Caco-2 (cell line): ENCODE measurements at regions of chr5 and their contacts with region 1.

Region 1: GRCh38 chr5:148523139-148523538 is 131.2 kb downstream of the HTR4 start:
- DNase-seq: peak in 1 of 2 experiments; percentile 4
- H3K4me3 ChIP-seq: no peak overlapping the region
- H3K4me3 Mint-ChIP-seq: no peak overlapping the region
- H3K27ac Mint-ChIP-seq: no peak overlapping the region
- H3K4me1 ChIP-seq: no peaks in the 10 kb centered on the region
- H3K4me1 Mint-ChIP-seq: no peaks in the 10 kb centered on the region
- H3K27me3 ChIP-seq: no peaks in the 10 kb centered on the region
- H3K27me3 Mint-ChIP-seq: peaks cover 16% of the 10 kb centered on the region
- CTCF ChIP-seq: no peak

Region 2: GRCh38 chr5:148542812-148543211 is 19.7 kb after region 1 on chr5:
- CTCF ChIA-PET with region 1: no interaction called
- POLR2A ChIA-PET with region 1: no interaction called
- intact Hi-C with region 1: no loop called
- DNase-seq: no peak
- H3K4me3 ChIP-seq: no peak overlapping the region
- H3K4me3 Mint-ChIP-seq: no peak overlapping the region
- H3K27ac Mint-ChIP-seq: no peak overlapping the region
- H3K4me1 ChIP-seq: no peaks in the 10 kb centered on the region
- H3K4me1 Mint-ChIP-seq: no peaks in the 10 kb centered on the region
- H3K27me3 ChIP-seq: no peaks in the 10 kb centered on the region
- H3K27me3 Mint-ChIP-seq: peaks cover 22% of the 10 kb centered on the region
- CTCF ChIP-seq: no peak

Region 3: DNA sequence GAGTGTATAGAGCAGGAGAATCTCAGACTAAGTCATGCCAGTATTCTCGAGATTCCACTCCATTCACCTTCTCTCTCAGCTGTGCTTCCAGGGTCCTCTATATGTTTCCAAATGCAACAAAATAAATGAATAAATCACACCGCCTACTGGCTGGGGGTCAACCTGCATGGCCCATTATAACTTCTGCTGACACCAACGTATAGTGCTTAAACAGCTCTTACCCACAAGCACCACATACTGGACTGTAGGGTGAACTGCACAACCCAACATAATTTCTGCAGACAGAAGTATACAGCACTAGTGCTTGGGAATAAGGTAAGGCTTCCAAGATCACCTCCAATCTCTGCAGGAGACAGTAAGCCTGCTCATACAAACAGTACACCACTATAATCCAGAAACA is 164.3 kb after region 1 on chr5:
- CTCF ChIA-PET with region 1: no interaction called
- POLR2A ChIA-PET with region 1: no interaction called
- intact Hi-C with region 1: loop called (anchors 1 kb)
- DNase-seq: peak; percentile 47 to 56
- H3K4me3 ChIP-seq: no peak overlapping the region
- H3K4me3 Mint-ChIP-seq: no peak overlapping the region
- H3K27ac Mint-ChIP-seq: no peak overlapping the region
- H3K4me1 ChIP-seq: no peaks in the 10 kb centered on the region
- H3K4me1 Mint-ChIP-seq: no peaks in the 10 kb centered on the region
- H3K27me3 ChIP-seq: no peaks in the 10 kb centered on the region
- H3K27me3 Mint-ChIP-seq: no peaks in the 10 kb centered on the region
- CTCF ChIP-seq: peak; percentile 67 to 70